ENCODE measurements at regions of chr3 and their contacts with region 1.

Region 1: GRCh38 chr3:131794766-131795388 is 239.9 kb downstream of the CPNE4 start:
- DNase-seq: peak in 1 of 2 donors; percentile 76
- H3K4me3 ChIP-seq: no peak overlapping the region
- H3K27ac ChIP-seq: no peak overlapping the region
- H3K4me1 ChIP-seq: peaks cover 0 to 11% (median 6%) of the 10 kb centered on the region in 4 donors
- H3K27me3 ChIP-seq: no peaks in the 10 kb centered on the region
- CTCF ChIP-seq: peak in 5 of 7 experiments; percentile 69 to 80 (median 74)
- EP300 ChIP-seq: no peak
- POLR2A ChIP-seq: no peak

Region 2: DNA sequence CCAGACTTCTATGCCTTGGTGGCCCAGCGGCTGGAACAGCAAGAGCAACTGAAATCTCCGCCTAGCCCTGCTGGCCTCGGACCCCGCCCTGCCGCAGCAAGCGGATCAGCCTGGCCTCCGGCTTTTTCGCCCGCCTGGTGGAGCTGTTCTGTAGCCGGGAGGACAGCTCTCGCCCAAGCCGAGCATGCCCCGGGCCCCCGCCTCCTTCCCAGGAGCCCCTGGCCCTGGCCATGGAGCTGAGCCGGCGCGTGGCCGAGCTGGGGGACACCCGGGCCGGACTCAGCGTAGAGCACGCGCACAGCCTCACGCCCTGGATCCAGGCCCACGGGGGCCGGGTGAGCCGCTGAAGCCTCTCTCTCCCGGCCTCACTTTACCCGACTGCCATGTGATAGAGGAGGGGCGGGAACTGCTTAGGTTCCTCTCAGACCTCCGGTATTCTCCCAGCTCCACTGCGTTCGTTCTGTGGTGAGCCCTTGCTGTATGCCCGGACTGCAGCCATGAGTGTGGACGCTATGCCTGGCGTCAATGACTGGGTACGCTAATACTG is 268.0 kb before region 1 on chr3:
- intact Hi-C with region 1: no loop called
- DNase-seq: peak; percentile 26 to 81
- H3K4me3 ChIP-seq: peak overlapping the region; percentile 26 to 38 (median 28)
- H3K27ac ChIP-seq: no peak overlapping the region
- H3K4me1 ChIP-seq: peaks cover 0 to 6% (median 4%) of the 10 kb centered on the region in 4 donors
- H3K27me3 ChIP-seq: peaks cover 0 to 37% (median 13%) of the 10 kb centered on the region in 3 donors
- CTCF ChIP-seq: no peak
- EP300 ChIP-seq: no peak
- POLR2A ChIP-seq: no peak

Region 3: GRCh38 chr3:132034486-132035464 is 239.9 kb after region 1 on chr3 and contains the start of gene CPNE4:
- intact Hi-C with region 1: loop called (anchors 10 kb)
- DNase-seq: peak; percentile 63 to 92
- H3K4me3 ChIP-seq: peak within 1 kb of the TSS in 1 of 4 donors; percentile 20
- H3K27ac ChIP-seq: no peak within 1 kb of the TSS
- H3K4me1 ChIP-seq: peaks cover 0 to 13% (median 9%) of the 10 kb centered on the region in 4 donors
- H3K27me3 ChIP-seq: peaks cover 7 to 67% (median 18%) of the 10 kb centered on the region in 3 donors
- CTCF ChIP-seq: peak in 3 of 7 experiments; percentile 7 to 40 (median 21)
- EP300 ChIP-seq: no peak
- POLR2A ChIP-seq: no peak
- total RNA-seq, gene CPNE4: 1.6 to 8.9 (median 3.5) TPM

Measured in stomach (tissue), 19 donors.